H1 (cell line): ENCODE measurements at regions of chr6 and their contacts with region 1.

Region 1: GRCh38 chr6:35468181-35468979 is at the start of gene RPL10A:
- DNase-seq: peak; percentile 82 to 96
- H3K4me3 ChIP-seq: peak within 1 kb of the TSS; percentile 86 to 99 (median 92)
- H3K27ac ChIP-seq: peak within 1 kb of the TSS; percentile 94
- H3K4me1 ChIP-seq: peaks cover 0 to 8% (median 5%) of the 10 kb centered on the region in 4 experiments; a peak in 6 of 7 replicates
- H3K27me3 ChIP-seq: no peaks in the 10 kb centered on the region; a peak in 1 of 7 replicates
- CTCF ChIP-seq: peak in 2 of 3 experiments; percentile 90 to 97; a peak in 3 of 4 replicates
- EP300 ChIP-seq: no peak
- POLR2A ChIP-seq: peak in 1 of 2 experiments; percentile 100; a peak in 2 of 3 replicates
- RAD21 ChIP-seq: peak; percentile 78 to 85
- total RNA-seq, gene RPL10A: 1,893 and 1,923 TPM in 2 replicates

Region 2: DNA sequence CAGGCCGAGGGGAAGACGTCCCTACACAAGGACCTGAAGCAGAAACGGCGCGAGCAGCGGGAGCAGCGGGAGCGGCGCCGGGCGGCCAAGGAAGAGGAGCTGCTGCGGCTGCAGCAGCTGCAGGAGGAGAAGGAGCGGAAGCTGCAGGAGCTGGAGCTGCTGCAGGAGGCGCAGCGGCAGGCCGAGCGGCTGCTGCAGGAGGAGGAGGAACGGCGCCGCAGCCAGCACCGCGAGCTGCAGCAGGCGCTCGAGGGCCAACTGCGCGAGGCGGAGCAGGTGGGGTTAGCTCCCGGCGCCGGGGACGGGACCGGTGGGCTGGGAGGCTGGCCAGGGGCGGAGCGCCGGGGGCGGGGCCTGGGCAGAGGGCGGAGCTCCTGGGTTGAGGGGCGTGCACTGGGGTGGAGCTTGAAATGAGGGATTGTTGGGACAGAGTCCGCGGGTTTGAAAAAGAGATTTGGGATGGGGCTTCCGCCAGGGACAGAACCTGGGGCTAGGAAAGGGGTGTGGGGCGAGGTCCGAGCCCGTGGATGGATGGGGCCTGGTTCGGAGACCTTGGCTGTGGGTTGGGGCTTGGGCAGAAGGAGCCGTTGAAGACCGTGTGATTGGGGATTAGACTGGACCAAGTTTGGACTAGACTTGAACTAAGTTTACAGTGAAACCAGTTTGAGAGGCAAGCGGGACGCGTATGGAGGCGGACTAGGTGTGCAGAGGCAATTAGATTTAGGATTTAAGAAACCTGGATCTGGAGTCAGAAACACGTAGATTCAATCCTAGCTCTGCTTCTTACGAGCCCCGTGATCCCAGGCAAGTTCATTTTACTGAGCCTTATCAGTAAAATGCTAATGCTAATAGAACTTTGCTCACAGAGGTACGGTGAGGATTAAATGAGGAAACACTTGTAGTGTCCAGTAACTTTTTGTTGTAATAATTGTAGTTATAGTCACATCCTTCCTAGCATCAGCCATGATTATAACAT is 149.9 kb before region 1 on chr6:
- CTCF ChIA-PET with region 1: interaction called, 5 read pairs
- POLR2A ChIA-PET with region 1: interaction called, 10 read pairs
- DNase-seq: peak; percentile 87 to 100
- H3K4me3 ChIP-seq: peak overlapping the region; percentile 42 to 62 (median 58)
- H3K27ac ChIP-seq: no peak overlapping the region
- H3K4me1 ChIP-seq: peaks cover 5 to 8% (median 6%) of the 10 kb centered on the region in 4 experiments
- H3K27me3 ChIP-seq: peaks cover 3 to 19% (median 14%) of the 10 kb centered on the region in 4 experiments
- CTCF ChIP-seq: no peak
- EP300 ChIP-seq: no peak
- POLR2A ChIP-seq: no peak
- RAD21 ChIP-seq: no peak

Region 3: DNA sequence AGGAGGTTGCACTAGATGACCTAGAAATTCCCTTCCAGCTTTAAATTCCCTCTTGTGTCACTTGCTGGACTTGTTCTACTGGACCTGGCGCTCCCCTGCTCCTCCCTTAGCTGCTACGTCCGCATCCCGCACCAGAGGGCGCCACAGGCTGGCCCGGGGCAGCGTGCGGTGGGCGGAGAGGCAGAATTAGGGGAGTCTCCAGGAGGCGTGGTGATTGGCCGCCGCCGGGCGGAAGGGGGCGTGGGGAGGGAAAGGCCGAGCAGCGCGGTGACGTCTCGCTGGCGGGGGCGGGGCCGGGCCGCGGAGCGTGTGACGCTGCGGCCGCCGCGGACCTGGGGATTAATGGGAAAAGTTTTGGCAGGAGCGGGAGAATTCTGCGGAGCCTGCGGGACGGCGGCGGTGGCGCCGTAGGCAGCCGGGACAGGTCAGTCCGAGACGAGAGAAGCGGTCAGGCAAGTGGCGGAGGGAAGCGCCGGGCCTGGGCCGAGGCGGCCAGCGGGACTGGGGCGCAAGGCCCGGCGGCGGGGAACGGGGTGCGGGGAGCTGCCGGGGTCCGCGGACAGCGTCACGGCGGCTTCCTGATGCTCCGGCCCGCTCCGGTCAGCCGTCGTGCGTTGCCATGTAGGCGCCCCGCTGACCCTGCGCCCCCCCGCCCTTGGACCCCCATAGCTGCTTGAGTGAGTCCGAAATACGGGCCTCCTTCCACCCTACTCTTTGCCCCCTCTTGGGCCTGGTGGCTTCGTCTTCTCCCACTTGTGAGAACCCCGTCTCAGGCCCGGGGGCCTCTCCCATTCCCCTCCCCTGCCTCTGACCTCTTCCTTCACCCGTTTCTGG is 125.9 kb before region 1 on chr6 and contains the start of gene PPARD:
- CTCF ChIA-PET with region 1: interaction called, 17 read pairs
- POLR2A ChIA-PET with region 1: interaction called, 11 read pairs
- DNase-seq: peak; percentile 82 to 100
- H3K4me3 ChIP-seq: peak within 1 kb of the TSS; percentile 38 to 77 (median 62)
- H3K27ac ChIP-seq: no peak within 1 kb of the TSS
- H3K4me1 ChIP-seq: peaks cover 0 to 7% (median 1%) of the 10 kb centered on the region in 4 experiments; a peak in 3 of 7 replicates
- H3K27me3 ChIP-seq: no peaks in the 10 kb centered on the region
- CTCF ChIP-seq: peak; percentile 95 to 98 (median 95)
- EP300 ChIP-seq: no peak
- POLR2A ChIP-seq: 0 out of 3 replicates have a peak, but pooled peaks of 1 of the 2 experiments have one; percentile 21
- RAD21 ChIP-seq: peak; percentile 99 to 100
- total RNA-seq, gene PPARD: 14.9 and 16.9 TPM in 2 replicates

Region 4: GRCh38 chr6:35457907-35458306 is 10.5 kb before region 1 on chr6:
- CTCF ChIA-PET with region 1: interaction called, 24 read pairs
- POLR2A ChIA-PET with region 1: interaction called, 197 read pairs
- DNase-seq: no peak
- H3K4me3 ChIP-seq: no peak overlapping the region
- H3K27ac ChIP-seq: no peak overlapping the region
- H3K4me1 ChIP-seq: peaks cover 5 to 8% (median 6%) of the 10 kb centered on the region in 4 experiments; a peak in 6 of 7 replicates
- H3K27me3 ChIP-seq: no peaks in the 10 kb centered on the region
- CTCF ChIP-seq: no peak
- EP300 ChIP-seq: no peak
- POLR2A ChIP-seq: no peak
- RAD21 ChIP-seq: peak in 1 of 2 experiments; percentile 7; a peak in 1 of 4 replicates

Region 5: DNA sequence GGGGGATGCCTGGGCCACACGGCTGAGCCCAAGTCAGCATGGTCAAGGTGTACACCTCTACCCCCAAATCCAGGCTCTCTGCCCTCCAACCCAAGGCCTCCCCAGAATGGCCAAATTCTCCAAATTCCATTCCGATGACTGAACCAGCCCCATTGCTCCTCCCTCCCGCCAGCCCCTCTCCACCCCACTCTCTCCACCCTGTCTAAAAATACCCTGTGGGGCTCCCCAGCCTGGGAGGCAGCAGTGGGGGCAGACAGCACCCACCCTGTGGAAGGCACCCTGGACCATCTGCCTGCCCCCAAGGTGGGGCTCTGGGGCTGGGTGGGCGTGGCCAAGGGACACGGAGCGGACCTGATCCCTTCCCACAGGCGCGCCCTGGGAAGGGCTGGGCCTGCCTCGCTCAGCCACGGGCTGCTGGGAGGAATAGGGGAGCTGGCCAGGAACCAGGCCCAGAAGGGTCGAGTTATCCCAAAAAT is 17.1 kb after region 1 on chr6:
- CTCF ChIA-PET with region 1: interaction called, 28 read pairs
- POLR2A ChIA-PET with region 1: interaction called, 1,319 read pairs
- DNase-seq: peak in 1 of 2 experiments; percentile 79
- H3K4me3 ChIP-seq: peak overlapping the region; percentile 9 to 60 (median 45); a peak in 7 of 8 replicates
- H3K27ac ChIP-seq: peak overlapping the region; percentile 97
- H3K4me1 ChIP-seq: peaks cover 21 to 48% (median 39%) of the 10 kb centered on the region in 4 experiments
- H3K27me3 ChIP-seq: no peaks in the 10 kb centered on the region; a peak in 1 of 7 replicates
- CTCF ChIP-seq: no peak
- EP300 ChIP-seq: peak in 1 of 2 experiments; percentile 59; a peak in 1 of 3 replicates
- POLR2A ChIP-seq: no peak
- RAD21 ChIP-seq: no peak

Region 6: GRCh38 chr6:35496841-35497570 is 28.6 kb after region 1 on chr6 and contains the start of gene TEAD3:
- CTCF ChIA-PET with region 1: interaction called, 8 read pairs
- POLR2A ChIA-PET with region 1: interaction called, 1,319 read pairs
- DNase-seq: no peak
- H3K4me3 ChIP-seq: peak within 1 kb of the TSS; percentile 46 to 92 (median 64)
- H3K27ac ChIP-seq: peak within 1 kb of the TSS; percentile 69; the same call in 1 of the 2 replicates
- H3K4me1 ChIP-seq: peaks cover 19 to 44% (median 34%) of the 10 kb centered on the region in 4 experiments
- H3K27me3 ChIP-seq: peaks cover 0 to 13% (median 6%) of the 10 kb centered on the region in 4 experiments; a peak in 4 of 7 replicates
- CTCF ChIP-seq: peak in 1 of 3 experiments; percentile 14; a peak in 1 of 4 replicates
- EP300 ChIP-seq: no peak
- POLR2A ChIP-seq: peak in 1 of 2 experiments; percentile 67; a peak in 2 of 3 replicates
- RAD21 ChIP-seq: peak in 1 of 2 experiments; percentile 7; a peak in 2 of 4 replicates
- total RNA-seq, gene TEAD3: 27.0 and 28.7 TPM in 2 replicates